Natural killer cell (primary cell): ENCODE measurements at regions of chrX and their contacts with region 1.

Region 1: DNA sequence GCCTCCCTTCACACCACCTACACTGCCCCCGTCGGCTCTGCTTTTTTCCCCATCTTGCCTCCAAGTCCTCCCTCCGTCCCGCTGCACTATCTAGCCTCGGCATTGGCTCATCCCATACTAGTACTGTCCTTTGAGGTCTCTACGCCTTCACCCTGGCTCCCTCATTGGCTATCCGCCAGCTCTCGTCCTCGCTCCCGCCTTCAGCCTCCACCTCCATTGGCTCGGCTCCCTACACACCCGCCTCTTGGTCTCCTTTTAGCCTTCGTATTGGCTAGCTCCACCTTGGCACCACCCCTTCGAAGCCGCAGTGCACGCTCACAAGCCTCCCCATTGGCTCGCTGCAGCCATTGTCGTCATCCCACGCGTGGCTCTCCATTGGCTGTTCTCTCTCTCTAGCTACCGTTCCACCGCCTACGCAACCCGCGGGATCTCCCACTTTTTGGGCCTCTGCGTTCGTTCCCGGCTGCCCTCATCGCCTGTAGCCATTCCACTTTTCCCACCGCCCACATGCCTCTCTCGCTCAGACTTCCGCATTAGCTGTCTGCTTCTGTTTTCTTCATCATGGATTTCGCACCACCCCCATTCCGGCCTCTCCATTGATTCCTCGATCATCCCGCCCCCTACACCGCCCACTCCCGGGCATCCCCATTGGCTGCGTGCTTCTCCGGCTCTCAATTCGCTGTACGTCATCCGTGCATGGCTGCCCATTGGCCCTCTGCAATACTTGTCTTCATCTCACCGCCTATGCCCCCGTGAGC is 404 bp upstream of the PPP1R3F start:
- DNase-seq: peak; percentile 87 to 97
- ATAC-seq: peak; percentile 82 to 94 (median 84)
- H3K4me3 ChIP-seq: peak overlapping the region; percentile 92
- H3K4me3 Mint-ChIP-seq: peak overlapping the region; percentile 90
- H3K27ac ChIP-seq: peak overlapping the region; percentile 100
- H3K27ac Mint-ChIP-seq: peak overlapping the region; percentile 95 to 96
- H3K4me1 ChIP-seq: peaks cover 48% of the 10 kb centered on the region
- H3K4me1 Mint-ChIP-seq: peaks cover 30 to 43% of the 10 kb centered on the region in 2 donors
- H3K27me3 ChIP-seq: no peaks in the 10 kb centered on the region
- H3K27me3 Mint-ChIP-seq: no peaks in the 10 kb centered on the region
- CTCF ChIP-seq: no peak

Region 2: DNA sequence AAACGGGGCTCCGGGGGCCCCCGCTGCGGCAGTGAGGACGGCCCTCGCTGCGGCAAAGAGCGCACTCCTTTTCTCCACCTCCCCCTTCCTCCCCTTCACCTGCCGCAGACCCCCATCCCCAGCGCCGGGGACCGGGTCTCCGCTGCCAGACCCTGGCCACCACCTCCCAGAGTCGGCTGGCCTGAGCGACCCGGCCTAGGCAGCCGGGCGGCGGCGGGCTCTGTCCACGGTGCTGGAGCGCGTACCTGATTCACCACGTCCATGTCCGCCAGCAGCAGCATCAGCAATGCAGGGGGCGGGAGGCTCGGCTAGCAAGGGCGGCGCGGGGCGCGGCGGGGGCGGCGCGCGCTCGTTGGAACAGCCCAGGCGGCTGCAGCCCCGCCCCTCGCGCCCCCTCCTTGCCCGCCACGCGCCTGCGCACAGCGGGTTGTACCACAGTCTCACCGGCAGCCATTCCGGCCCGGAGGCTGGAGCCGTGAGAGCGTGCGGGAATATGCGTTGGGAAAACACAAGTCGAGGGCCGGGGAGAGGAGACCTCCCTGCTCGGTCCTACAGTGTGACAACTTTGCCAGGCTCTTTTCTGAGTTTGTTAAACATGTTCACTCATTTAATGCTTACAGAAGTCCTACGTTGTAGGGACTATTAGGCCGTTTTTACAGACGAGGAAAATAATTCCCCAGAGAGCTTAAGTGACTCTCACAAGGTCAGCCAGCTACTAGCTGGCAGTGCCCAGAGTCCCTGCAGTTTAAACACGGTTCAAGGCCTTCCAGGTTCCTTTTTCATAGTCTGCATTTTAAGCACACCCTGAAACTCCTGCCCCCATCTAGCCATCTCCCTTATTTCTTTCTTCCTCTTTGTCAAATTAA is 69.0 kb before region 1 on chrX and contains the start of gene SYP:
- intact Hi-C with region 1: loop called (anchors 1 kb)
- DNase-seq: peak; percentile 85 to 92
- ATAC-seq: peak; percentile 99 to 100 (median 99)
- H3K4me3 ChIP-seq: peak within 1 kb of the TSS; percentile 37
- H3K4me3 Mint-ChIP-seq: peak within 1 kb of the TSS; percentile 52
- H3K27ac ChIP-seq: peak within 1 kb of the TSS; percentile 68
- H3K27ac Mint-ChIP-seq: no peak within 1 kb of the TSS
- H3K4me1 ChIP-seq: peaks cover 18% of the 10 kb centered on the region
- H3K4me1 Mint-ChIP-seq: peaks cover 0 to 19% of the 10 kb centered on the region in 2 donors
- H3K27me3 ChIP-seq: no peaks in the 10 kb centered on the region
- H3K27me3 Mint-ChIP-seq: no peaks in the 10 kb centered on the region
- CTCF ChIP-seq: no peak
- total RNA-seq, gene SYP: 0.36 to 1.0 (median 0.80) TPM

Region 3: GRCh38 chrX:49309401-49309981 is 40.3 kb after region 1 on chrX:
- intact Hi-C with region 1: loop called (anchors 1 kb)
- DNase-seq: peak; percentile 25 to 55
- ATAC-seq: peak; percentile 80 to 87 (median 82)
- H3K4me3 ChIP-seq: peak overlapping the region; percentile 29
- H3K4me3 Mint-ChIP-seq: peak overlapping the region; percentile 92
- H3K27ac ChIP-seq: peak overlapping the region; percentile 82
- H3K27ac Mint-ChIP-seq: peak overlapping the region; percentile 92 to 94
- H3K4me1 ChIP-seq: peaks cover 30% of the 10 kb centered on the region
- H3K4me1 Mint-ChIP-seq: peaks cover 23 to 24% of the 10 kb centered on the region in 2 donors
- H3K27me3 ChIP-seq: no peaks in the 10 kb centered on the region
- H3K27me3 Mint-ChIP-seq: peaks cover 0 to 27% of the 10 kb centered on the region in 2 donors
- CTCF ChIP-seq: no peak